ENCODE measurements at regions of chr4 and their contacts with region 1.

Region 1: DNA sequence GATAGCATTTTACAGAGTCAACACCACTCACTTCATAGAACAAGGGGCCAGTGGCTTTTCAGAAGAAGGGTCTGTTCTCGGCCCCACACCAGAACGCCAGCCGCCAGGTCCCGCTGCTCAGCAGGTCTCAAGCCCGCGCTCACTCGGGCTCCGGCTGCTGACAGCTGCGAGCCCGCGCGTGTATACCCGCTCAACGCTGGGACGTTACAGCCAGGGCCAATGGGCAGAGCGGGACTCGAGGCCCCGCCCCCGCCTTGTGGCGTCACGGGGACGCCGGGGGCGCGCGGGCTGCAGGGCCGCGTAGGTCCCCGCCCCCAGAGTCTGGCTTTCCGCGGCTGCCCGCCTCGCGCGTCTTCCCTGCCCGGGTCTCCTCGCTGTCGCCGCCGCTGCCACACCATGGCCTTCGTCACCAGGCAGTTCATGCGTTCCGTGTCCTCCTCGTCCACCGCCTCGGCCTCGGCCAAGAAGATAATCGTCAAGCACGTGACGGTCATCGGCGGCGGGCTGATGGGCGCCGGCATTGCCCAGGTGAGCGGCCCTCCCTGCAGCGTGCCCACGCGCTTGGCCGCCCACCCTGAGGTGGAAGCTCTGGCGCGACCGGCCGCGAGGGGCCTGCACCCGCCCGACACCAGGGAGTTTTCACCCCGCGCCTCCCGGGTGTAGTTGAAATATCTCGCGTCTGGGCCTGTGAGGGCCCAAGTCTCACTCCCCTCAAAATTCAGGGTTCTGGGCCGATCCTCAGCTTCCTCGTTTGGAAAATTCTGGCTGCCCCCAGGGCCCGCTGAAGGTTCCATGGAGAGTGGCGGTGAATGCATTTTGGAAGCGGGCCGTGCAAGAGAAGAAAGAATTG is at the start of gene HADH:
- DNase-seq: peak; percentile 94
- H3K4me3 Mint-ChIP-seq: peak within 1 kb of the TSS; percentile 98
- H3K27ac Mint-ChIP-seq: peak within 1 kb of the TSS; percentile 90
- H3K4me1 Mint-ChIP-seq: peaks cover 57% of the 10 kb centered on the region
- H3K27me3 Mint-ChIP-seq: no peaks in the 10 kb centered on the region
- total RNA-seq, gene HADH: 56.1 to 57.6 TPM

Region 2: GRCh38 chr4:106315968-106316772 is 1673.6 kb before region 1 on chr4 and contains the starts of genes AIMP1 and TBCK:
- CTCF ChIA-PET with region 1: no interaction called
- intact Hi-C with region 1: loop called (anchors 10 kb)
- DNase-seq: peak; percentile 90
- H3K4me3 Mint-ChIP-seq: no peak within 1 kb of the TSS
- H3K27ac Mint-ChIP-seq: no peak within 1 kb of the TSS
- H3K4me1 Mint-ChIP-seq: peaks cover 45% of the 10 kb centered on the region
- H3K27me3 Mint-ChIP-seq: no peaks in the 10 kb centered on the region
- total RNA-seq, gene AIMP1: 49.7 to 52.0 TPM
- total RNA-seq, gene TBCK: 19.4 to 21.6 TPM

Region 3: GRCh38 chr4:107824353-107825071 is 165.2 kb before region 1 on chr4 and contains the start of gene SGMS2:
- CTCF ChIA-PET with region 1: no interaction called
- intact Hi-C with region 1: loop called (anchors 5 kb)
- DNase-seq: peak; percentile 85
- H3K4me3 Mint-ChIP-seq: peak within 1 kb of the TSS; percentile 78
- H3K27ac Mint-ChIP-seq: no peak within 1 kb of the TSS
- H3K4me1 Mint-ChIP-seq: peaks cover 9% of the 10 kb centered on the region
- H3K27me3 Mint-ChIP-seq: peaks cover 44% of the 10 kb centered on the region
- total RNA-seq, gene SGMS2: 0.07 TPM in 1 of 2 experiments, not detected in the other

Region 4: DNA sequence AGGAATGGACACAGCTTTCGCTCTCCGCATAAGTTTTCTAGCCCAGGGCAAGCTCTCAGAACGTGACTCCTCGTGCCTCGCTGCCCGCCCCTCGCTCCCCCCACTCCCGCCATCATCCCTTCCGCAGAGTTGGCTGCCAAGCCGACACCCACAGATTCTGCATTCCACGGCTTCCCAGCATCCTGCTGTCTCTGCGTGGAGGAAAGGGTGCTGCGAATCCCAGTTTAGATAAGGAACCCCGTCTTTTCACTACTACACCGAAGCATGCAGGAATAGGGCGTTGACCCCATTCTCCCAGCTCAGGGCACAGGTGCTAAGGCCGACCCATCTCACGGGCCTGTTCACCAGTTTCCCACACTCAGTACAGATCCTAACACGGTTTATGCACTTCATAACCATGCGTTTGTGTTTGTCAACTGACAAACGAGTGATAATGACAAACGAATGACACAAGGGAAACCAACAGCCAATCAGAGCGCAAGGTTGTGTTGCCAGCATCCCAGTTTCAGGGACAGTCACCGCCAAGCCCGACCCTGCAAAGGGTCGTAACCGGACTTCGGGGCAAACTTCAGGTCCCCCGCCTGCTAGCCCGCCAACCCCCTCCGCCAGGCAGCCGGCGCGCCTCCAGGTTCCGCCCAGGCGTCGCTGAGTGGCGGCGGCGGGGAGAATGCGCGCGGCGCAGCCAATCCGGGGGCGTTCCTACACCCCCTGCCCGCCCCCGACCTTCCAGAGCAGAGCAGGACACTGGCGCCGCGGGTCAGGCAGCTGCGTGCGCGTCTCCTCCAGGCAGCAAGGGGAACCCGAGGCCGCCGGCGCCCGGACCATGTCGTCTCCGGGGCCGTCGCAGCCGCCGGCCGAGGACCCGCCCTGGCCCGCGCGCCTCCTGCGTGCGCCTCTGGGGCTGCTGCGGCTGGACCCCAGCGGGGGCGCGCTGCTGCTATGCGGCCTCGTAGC is 58.7 kb before region 1 on chr4 and contains the start of gene CYP2U1:
- CTCF ChIA-PET with region 1: no interaction called
- intact Hi-C with region 1: loop called (anchors 1 kb)
- DNase-seq: peak; percentile 78
- H3K4me3 Mint-ChIP-seq: peak within 1 kb of the TSS; percentile 83
- H3K27ac Mint-ChIP-seq: no peak within 1 kb of the TSS
- H3K4me1 Mint-ChIP-seq: peaks cover 15% of the 10 kb centered on the region
- H3K27me3 Mint-ChIP-seq: no peaks in the 10 kb centered on the region
- total RNA-seq, gene CYP2U1: 1.5 to 1.8 TPM

Region 5: GRCh38 chr4:107937040-107937785 is 52.5 kb before region 1 on chr4:
- CTCF ChIA-PET with region 1: no interaction called
- intact Hi-C with region 1: loop called (anchors 1 kb)
- DNase-seq: no peak
- H3K4me3 Mint-ChIP-seq: no peak overlapping the region
- H3K27ac Mint-ChIP-seq: no peak overlapping the region
- H3K4me1 Mint-ChIP-seq: peaks cover 21% of the 10 kb centered on the region
- H3K27me3 Mint-ChIP-seq: no peaks in the 10 kb centered on the region

Region 6: DNA sequence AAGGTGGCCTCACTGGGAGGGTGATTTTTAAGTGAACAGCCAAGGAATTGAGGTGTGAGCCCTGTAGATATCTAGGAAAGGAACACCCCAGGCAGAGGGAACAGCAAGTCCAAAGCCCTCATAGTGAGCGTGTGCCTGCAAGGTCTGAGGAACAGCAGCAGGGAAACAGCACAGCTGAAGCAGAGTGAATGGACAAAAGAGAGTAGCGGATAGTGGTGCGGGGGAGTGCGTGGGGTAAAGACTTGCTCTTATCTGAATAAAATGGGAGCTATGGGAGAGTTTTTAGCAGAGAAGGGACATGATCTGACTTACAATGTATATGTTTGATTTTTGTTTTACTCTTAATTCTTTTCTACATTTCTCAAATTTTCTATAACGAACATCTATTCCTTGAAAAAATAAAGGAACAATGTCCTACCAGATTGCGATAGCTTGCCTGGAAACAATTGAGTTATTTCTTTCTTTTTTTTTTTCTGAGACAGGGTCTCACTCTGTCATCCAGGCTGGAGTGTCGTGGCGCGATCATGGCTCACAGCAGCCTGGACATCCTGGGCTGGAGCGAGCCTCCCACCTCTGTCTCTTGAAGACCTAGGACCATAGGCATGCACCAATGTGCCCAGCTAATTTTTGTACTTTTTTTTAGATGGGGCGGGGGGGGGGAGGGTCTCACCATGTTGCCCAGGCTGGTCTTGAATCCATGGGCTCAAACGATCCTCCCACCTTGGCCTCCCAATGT is 19.5 kb before region 1 on chr4:
- CTCF ChIA-PET with region 1: no interaction called
- intact Hi-C with region 1: no loop called
- DNase-seq: no peak
- H3K4me3 Mint-ChIP-seq: no peak overlapping the region
- H3K27ac Mint-ChIP-seq: no peak overlapping the region
- H3K4me1 Mint-ChIP-seq: peaks cover 2% of the 10 kb centered on the region
- H3K27me3 Mint-ChIP-seq: no peaks in the 10 kb centered on the region

Region 7: DNA sequence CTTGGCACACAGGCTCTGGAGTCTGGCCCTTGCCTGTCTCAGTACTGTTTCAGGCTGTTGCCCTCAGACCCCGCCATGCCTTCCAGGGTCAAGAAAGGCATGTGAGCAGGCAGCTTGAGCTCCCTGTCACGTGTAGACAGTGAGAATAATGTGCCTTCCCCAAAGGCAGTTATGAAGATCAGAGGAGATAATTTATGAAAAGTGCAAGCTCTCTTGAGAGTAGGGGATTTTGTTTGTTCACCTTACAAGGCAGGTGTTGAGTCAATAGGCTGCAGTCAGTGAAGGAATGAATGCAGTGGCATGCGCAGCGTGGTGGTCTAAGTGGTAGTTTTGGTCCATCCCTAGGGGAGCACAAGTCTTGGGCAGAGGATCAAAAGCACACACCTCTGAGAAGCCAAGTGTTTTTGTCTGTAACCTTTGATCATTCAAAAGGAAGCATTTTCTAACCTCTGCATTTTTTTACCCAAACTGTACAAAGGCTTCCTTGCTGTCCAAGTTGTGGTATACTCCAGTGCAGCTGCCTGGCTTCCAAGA is 14.3 kb after region 1 on chr4:
- CTCF ChIA-PET with region 1: interaction called, 4 read pairs
- intact Hi-C with region 1: loop called (anchors 2 kb)
- DNase-seq: peak; percentile 36
- H3K4me3 Mint-ChIP-seq: no peak overlapping the region
- H3K27ac Mint-ChIP-seq: no peak overlapping the region
- H3K4me1 Mint-ChIP-seq: peaks cover 52% of the 10 kb centered on the region
- H3K27me3 Mint-ChIP-seq: no peaks in the 10 kb centered on the region

Region 8: GRCh38 chr4:108650212-108651013 is 660.7 kb after region 1 on chr4 and contains the start of gene OSTC:
- CTCF ChIA-PET with region 1: no interaction called
- intact Hi-C with region 1: loop called (anchors 1 kb)
- DNase-seq: peak; percentile 95
- H3K4me3 Mint-ChIP-seq: peak within 1 kb of the TSS; percentile 95
- H3K27ac Mint-ChIP-seq: peak within 1 kb of the TSS; percentile 91
- H3K4me1 Mint-ChIP-seq: peaks cover 30% of the 10 kb centered on the region
- H3K27me3 Mint-ChIP-seq: no peaks in the 10 kb centered on the region
- total RNA-seq, gene OSTC: 72.5 to 73.3 TPM